Posterior vena cava (tissue), 2 donors: ENCODE measurements at regions of chr9 and their contacts with region 1.

Region 1: DNA sequence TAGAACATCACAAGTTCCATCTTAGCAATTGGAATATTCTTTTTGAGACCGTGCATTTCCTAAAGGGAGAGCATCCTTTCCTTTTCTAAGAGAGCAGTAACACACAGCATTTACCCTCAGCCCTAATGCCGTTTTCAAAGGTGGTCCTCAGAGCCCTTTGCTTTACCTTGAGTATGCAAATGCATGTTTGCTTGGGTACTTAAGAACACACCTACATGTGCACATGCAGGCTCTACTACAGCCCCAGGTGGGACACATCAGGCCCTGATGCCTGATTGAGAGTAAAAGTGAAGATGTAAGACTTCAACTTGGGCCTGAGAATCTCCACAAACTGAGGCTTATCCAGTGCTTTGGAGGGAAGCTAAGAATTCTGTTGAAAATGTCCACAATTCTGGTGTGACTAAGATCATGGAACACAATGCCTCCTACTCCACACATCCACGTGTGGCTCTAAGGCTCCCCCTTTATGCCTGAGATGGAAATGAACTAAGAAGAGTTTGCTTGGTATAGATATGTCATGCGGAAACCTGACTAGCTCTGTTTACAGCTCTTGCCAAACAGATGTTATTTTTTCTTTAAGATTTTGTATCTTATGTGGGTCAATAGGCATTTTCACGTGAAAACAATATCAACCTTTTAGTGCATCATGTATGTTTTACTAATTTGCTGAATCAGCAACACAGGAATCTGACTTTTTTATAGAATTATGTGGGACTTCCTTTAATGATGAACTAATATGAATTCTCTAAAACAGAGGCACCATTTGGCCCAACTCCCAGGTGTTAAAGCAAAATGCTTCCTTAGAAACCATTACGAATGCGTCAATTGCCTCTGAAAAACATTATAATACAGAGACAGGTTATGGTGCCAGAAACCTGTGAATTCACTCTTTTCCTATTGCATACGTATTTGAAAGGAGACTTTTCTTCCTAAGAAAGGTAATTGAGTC is 48.9 kb upstream of the SLC2A8 start:
- DNase-seq: no peak

Region 2: DNA sequence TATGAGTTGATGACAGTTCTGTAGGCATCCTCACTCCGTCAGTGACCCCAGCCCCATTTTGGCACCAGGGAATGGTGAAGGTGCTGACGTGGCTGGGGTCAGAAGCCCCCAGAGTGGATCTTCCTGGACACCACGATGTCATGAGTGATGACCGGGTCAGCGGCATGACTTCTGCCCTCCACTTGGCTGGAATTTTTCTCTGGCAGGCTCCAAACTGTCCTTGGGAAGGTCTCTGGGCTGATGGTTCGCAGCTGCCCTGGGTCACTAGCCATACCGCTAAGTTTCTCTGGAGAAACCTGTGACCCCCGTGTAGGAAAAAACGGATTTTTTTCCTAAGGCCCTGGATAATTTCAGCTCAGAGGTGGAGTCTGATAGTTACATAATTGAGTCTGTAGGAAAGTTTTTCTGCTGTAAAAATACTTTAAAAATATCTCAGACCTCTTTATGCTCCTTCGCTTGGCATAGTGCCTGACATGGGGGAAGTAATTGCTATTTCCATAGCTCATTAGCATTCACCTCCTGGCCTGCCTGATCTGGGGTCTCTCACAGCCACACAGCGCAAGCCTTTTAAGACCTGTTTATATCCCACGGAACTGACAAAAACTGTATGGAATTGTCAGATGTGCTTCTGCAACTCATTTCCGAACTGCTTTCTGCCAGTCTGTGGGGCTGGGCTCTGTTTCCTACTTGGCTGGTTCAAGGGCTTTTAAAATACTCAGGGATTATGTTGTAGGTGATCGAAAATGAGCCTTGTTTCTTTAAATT is 294.9 kb before region 1 on chr9:
- intact Hi-C with region 1: no loop called
- DNase-seq: no peak

Region 3: GRCh38 chr9:127214421-127215267 is 133.5 kb before region 1 on chr9:
- intact Hi-C with region 1: loop called (anchors 5 to 10 kb)
- DNase-seq: no peak

Region 4: DNA sequence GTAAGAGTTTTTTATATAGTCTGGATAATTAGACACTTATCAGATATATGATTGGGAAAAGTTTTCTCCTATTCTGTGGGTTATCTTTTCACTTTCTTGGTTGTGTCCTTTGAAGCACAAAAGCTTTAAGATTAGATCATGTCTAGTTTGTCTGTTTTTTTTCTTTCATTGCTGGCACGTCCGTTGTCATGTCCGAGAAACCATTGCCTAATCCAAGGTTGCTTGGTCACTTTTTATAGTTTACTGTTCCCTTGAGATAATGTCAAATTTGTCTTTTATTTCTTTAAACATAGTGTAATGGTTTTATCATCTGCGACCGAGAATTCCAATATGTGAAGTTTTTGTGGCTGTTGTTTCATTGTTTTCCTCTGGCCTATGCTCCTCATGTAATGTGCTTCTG is 54.8 kb before region 1 on chr9:
- intact Hi-C with region 1: loop called in 1 of 2 experiments (anchors 10 kb)
- DNase-seq: no peak

Region 5: GRCh38 chr9:127396808-127397497 is 48.8 kb after region 1 on chr9 and contains the start of gene SLC2A8:
- intact Hi-C with region 1: no loop called
- DNase-seq: peak; percentile 99
- total RNA-seq, gene SLC2A8: 10.4 to 16.3 TPM

Region 6: GRCh38 chr9:127519301-127520166 is 171.4 kb after region 1 on chr9:
- intact Hi-C with region 1: no loop called
- DNase-seq: peak; percentile 88

Region 7: DNA sequence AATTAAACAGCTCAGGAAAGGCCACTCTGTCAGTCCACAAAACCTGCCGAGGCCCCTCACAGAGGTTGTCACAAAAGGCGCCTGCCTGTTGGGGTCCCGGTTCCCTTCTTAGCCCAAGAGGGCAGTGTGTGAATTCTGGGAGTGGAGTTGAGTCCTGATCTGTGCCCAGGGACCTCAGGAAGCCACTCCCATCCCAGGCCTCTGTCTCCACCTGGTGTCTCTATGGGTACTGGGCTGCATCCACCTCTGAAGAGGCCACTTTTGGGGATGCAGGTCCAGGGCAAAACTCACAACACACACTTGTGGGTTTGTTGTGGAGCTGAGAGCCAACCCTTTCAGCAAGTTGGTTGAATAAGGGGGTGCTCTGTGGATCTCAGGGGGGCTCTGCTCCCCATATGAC is 189.7 kb after region 1 on chr9:
- intact Hi-C with region 1: no loop called
- DNase-seq: no peak